ENCODE measurements at regions of chr14 and their contacts with region 1.

Region 1: GRCh38 chr14:80809663-80810062 is 131.9 kb downstream of the CEP128 start:
- DNase-seq: no peak
- ATAC-seq: no peak
- H3K4me3 Mint-ChIP-seq: no peak overlapping the region
- H3K27ac Mint-ChIP-seq: no peak overlapping the region
- H3K4me1 Mint-ChIP-seq: no peaks in the 10 kb centered on the region
- H3K27me3 Mint-ChIP-seq: no peaks in the 10 kb centered on the region
- CTCF ChIP-seq: no peak

Region 2: DNA sequence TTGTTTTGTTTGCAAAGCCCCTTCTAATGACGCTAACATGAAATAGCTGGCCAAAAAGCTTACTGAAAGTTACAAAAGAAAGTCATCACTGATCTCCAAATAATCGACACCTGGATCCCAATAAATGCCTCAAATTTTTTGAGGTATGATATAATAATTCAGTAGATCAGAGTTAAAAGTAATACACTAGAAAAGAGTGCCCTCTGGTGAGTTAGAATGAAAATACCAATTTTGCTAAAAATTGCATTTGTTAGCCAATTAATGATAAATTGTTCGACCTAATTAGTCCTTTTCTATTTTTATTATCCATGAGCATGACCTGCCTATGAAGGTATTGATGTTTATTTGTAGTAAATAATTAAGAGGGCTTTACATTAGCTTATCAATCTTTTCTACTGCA is 53.3 kb after region 1 on chr14:
- CTCF ChIA-PET with region 1: no interaction called
- POLR2A ChIA-PET with region 1: no interaction called
- intact Hi-C with region 1: loop called (anchors 1 kb)
- DNase-seq: no peak
- ATAC-seq: no peak
- H3K4me3 Mint-ChIP-seq: no peak overlapping the region
- H3K27ac Mint-ChIP-seq: no peak overlapping the region
- H3K4me1 Mint-ChIP-seq: no peaks in the 10 kb centered on the region
- H3K27me3 Mint-ChIP-seq: no peaks in the 10 kb centered on the region
- CTCF ChIP-seq: no peak

Region 3: GRCh38 chr14:80930836-80931389 is 121.2 kb after region 1 on chr14:
- CTCF ChIA-PET with region 1: no interaction called
- POLR2A ChIA-PET with region 1: no interaction called
- intact Hi-C with region 1: no loop called
- DNase-seq: no peak
- ATAC-seq: peak; percentile 97
- H3K4me3 Mint-ChIP-seq: peak overlapping the region; percentile 66
- H3K27ac Mint-ChIP-seq: peak overlapping the region; percentile 79
- H3K4me1 Mint-ChIP-seq: peaks cover 24% of the 10 kb centered on the region
- H3K27me3 Mint-ChIP-seq: no peaks in the 10 kb centered on the region
- CTCF ChIP-seq: no peak

Region 4: GRCh38 chr14:81093651-81094050 is 284.0 kb after region 1 on chr14:
- CTCF ChIA-PET with region 1: no interaction called
- POLR2A ChIA-PET with region 1: no interaction called
- intact Hi-C with region 1: no loop called
- DNase-seq: no peak
- ATAC-seq: no peak
- H3K4me3 Mint-ChIP-seq: no peak overlapping the region
- H3K27ac Mint-ChIP-seq: no peak overlapping the region
- H3K4me1 Mint-ChIP-seq: no peaks in the 10 kb centered on the region
- H3K27me3 Mint-ChIP-seq: no peaks in the 10 kb centered on the region
- CTCF ChIP-seq: no peak

Measured in activated B cell treated with CpG ODN at 0.5 μM for 24 hours (primary cell).